Aorta (tissue), 5 donors: ENCODE measurements at regions of chr1 and their contacts with region 1.

Region 1: DNA sequence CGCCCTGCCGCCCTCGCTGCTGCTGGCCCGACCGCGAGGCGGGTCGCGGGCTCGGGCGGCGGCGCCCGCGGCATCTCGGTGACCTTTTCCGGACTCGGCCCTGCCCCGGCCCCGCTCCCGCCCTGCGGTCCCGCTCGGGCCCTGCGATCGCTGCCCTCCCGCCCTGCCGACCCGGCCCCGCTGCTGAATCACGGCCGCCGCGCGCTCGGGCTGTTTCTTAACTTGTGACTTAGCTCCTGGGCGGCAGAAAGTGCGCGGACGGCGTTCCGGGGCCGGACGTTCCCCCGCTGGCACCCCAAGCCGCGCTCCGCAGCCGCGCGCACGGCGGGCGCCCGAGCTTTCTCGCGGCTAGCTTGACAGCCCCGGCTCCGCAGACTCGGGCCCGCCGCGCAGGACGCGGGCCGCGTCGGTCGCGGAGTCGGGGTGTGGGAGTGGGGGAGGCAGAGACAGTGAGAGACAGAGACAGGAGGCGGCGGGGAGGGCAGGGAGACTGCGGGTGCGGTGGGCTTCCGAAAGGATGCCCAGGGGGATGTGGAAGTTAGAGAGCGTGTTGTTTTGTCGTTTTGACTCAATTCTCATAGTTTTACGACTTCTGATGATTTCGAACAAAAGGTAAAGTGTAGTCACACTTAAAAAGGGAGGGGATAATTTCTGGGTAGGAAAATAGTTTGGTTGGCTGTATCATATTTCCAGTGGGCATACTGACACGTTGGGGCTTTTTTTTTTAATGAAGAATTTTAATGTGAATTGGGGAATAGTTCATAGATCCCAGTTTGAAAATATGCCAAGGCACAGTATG is 49.8 kb downstream of the PRDM2 start:
- DNase-seq: peak; percentile 79 to 92
- ATAC-seq: peak; percentile 77
- H3K4me3 ChIP-seq: peak overlapping the region; percentile 95 to 99
- H3K27ac ChIP-seq: peak overlapping the region; percentile 92 to 96
- H3K4me1 ChIP-seq: peaks cover 5 to 9% of the 10 kb centered on the region in 2 donors
- H3K27me3 ChIP-seq: no peaks in the 10 kb centered on the region

Region 2: DNA sequence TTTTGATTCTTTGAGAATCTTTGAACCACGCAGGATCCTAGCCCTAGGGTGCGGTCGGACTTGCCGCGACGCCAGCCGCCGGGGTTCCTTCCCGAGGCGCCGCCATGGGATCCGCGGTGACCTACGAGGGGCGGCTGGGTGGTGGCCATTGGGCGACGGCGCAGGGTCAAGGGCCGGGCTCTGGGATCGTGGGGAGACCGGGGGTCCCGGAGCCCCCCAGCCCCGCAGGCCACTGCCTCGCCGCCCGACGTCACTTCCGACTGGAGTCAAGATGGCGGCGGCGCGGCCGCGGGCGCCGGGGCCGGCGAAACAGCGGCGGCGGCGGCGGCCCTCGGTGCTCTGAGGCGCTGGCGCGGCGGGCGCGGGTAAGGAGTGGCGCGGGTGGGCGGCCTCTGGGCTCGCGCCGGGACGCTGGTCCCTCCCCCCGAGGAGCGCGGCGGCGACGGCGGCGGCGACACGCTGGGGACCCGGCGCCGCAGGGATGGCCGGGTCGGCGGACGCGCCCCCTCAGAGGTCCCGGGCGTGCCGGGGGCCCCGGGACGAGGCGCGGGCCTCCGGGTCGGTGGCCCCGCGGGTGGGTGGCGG is 49.7 kb before region 1 on chr1 and contains the start of gene PRDM2:
- intact Hi-C with region 1: loop called in 1 of 2 experiments (anchors 5 kb)
- DNase-seq: peak; percentile 68 to 85
- ATAC-seq: peak; percentile 71
- H3K4me3 ChIP-seq: peak within 1 kb of the TSS; percentile 90 to 91
- H3K27ac ChIP-seq: peak within 1 kb of the TSS; percentile 83 to 92
- H3K4me1 ChIP-seq: no peaks in the 10 kb centered on the region
- H3K27me3 ChIP-seq: no peaks in the 10 kb centered on the region
- total RNA-seq, gene PRDM2: 55.6 to 58.7 TPM

Region 3: DNA sequence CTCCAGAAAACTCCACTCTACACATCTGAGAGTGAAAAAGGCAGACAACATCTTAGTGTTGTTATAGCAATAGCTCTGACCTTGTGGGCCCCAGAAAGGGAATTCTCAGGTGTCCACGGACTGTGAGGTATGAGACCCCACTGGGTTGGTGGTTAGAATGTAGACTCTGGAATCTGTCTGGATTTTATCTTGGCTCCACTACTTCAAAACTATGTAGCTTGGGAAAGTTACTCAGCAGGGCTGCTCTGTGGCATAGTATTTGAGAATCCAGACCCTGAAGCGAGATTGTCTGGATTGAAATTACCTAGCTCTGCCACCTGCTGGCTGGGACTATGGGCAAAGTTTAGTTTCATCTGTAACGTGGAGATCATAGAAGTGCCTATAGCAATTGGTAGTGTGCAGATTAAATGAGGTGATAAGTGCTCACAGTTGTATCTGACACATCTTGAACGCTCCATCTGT is 24.0 kb before region 1 on chr1:
- intact Hi-C with region 1: no loop called
- DNase-seq: no peak
- ATAC-seq: no peak
- H3K4me3 ChIP-seq: no peak overlapping the region
- H3K27ac ChIP-seq: no peak overlapping the region
- H3K4me1 ChIP-seq: no peaks in the 10 kb centered on the region
- H3K27me3 ChIP-seq: no peaks in the 10 kb centered on the region